HepG2 (cell line): ENCODE measurements at regions of chr1 and their contacts with region 1.

Region 1: GRCh38 chr1:48916130-48917069 is 139.7 kb upstream of the BEND5 start:
- DNase-seq: peak; percentile 29
- ATAC-seq: peak; percentile 88
- H3K4me3 ChIP-seq: peak overlapping the region in 1 of 3 experiments; percentile 15; a peak in 1 of 6 replicates
- H3K27ac ChIP-seq: no peak overlapping the region
- H3K4me1 ChIP-seq: peaks cover 9% of the 10 kb centered on the region; the same call in 1 of the 2 replicates
- H3K27me3 ChIP-seq: no peaks in the 10 kb centered on the region
- CTCF ChIP-seq: peak; percentile 59
- EP300 ChIP-seq: no peak
- POLR2A ChIP-seq: no peak
- RAD21 ChIP-seq: no peak

Region 2: GRCh38 chr1:48841461-48841860 is 74.9 kb before region 1 on chr1:
- CTCF ChIA-PET with region 1: no interaction called
- POLR2A ChIA-PET with region 1: no interaction called
- in situ Hi-C with region 1: no loop called
- intact Hi-C with region 1: no loop called
- DNase-seq: no peak
- ATAC-seq: no peak
- H3K4me3 ChIP-seq: no peak overlapping the region
- H3K27ac ChIP-seq: no peak overlapping the region
- H3K4me1 ChIP-seq: no peaks in the 10 kb centered on the region
- H3K27me3 ChIP-seq: no peaks in the 10 kb centered on the region
- CTCF ChIP-seq: no peak
- EP300 ChIP-seq: no peak
- POLR2A ChIP-seq: no peak
- RAD21 ChIP-seq: no peak

Region 3: DNA sequence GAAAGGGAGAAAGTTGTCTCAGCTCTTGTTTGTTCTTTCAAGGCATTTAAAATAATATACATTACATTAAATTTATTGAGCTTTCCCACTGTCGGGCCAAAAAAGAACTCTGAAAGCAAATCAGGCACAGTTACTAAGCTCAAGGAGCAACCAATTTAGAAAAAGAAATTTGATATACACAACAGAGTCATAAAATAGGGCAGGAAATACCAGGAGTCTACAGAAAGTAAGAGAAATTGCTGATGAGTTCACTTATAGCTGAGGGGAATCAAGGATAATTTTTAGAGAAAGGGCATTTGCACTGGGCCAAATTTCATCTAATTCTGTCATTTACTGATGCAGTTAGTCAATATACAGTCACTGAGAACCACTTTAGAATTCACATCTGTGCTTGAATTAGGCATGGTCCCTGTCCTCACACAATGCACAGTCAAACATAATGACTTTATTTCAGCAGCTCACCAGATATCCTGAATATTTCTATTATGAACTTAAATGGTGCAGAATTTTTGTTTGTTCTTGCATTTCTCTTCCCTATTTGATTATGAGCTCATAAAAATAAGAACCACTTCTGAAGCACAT is 109.9 kb after region 1 on chr1:
- CTCF ChIA-PET with region 1: no interaction called
- POLR2A ChIA-PET with region 1: no interaction called
- in situ Hi-C with region 1: no loop called
- intact Hi-C with region 1: no loop called
- DNase-seq: no peak
- ATAC-seq: no peak
- H3K4me3 ChIP-seq: no peak overlapping the region
- H3K27ac ChIP-seq: no peak overlapping the region
- H3K4me1 ChIP-seq: no peaks in the 10 kb centered on the region
- H3K27me3 ChIP-seq: no peaks in the 10 kb centered on the region
- CTCF ChIP-seq: no peak
- EP300 ChIP-seq: no peak
- POLR2A ChIP-seq: no peak
- RAD21 ChIP-seq: no peak

Region 4: DNA sequence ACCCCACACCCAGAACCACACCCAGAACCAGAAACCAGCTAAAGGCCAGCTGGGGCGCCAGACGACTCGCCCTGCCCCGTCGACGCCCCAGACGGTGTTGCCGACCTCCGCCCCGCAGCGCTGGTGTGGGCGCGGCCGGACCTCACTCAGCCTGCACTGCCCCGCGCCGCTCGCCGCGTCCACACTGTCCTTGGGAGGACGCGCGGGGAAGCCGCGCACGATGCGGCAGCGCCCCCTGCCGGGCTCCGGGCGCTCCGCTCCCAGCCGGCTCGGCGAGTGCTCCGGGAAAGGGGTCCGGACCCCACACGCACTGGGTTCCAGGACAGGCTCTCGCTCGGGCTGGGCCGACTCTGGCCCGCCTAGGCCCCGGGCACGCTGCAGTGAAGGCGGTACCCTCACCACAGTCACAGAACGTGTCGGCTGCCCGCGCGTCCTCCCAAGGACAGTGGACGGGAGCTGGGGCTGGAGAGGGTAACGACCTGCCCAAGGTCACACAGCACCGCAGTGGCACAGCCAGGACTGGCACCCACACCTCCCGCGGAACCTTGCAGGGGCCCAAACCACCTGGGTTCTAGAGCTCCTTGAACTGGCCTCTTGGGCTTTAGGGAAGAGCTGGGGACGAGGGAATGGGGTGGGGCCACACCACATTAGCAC is 1416.7 kb after region 1 on chr1:
- CTCF ChIA-PET with region 1: interaction called, 5 read pairs
- POLR2A ChIA-PET with region 1: no interaction called
- in situ Hi-C with region 1: loop called (anchors 25 kb)
- intact Hi-C with region 1: no loop called
- DNase-seq: peak; percentile 21
- ATAC-seq: peak; percentile 97
- H3K4me3 ChIP-seq: peak overlapping the region; percentile 48 to 82 (median 58)
- H3K27ac ChIP-seq: no peak overlapping the region
- H3K4me1 ChIP-seq: no peaks in the 10 kb centered on the region
- H3K27me3 ChIP-seq: peaks cover 0 to 22% of the 10 kb centered on the region in 2 experiments; a peak in 3 of 5 replicates
- CTCF ChIP-seq: peak; percentile 85
- EP300 ChIP-seq: no peak
- POLR2A ChIP-seq: no peak
- RAD21 ChIP-seq: peak; percentile 88